Mammary epithelial cell (primary cell): ENCODE measurements at regions of chr22 and their contacts with region 1.

Region 1: GRCh38 chr22:44735540-44736488 is 16.6 kb upstream of the ARHGAP8 start:
- DNase-seq: no peak
- H3K4me3 ChIP-seq: no peak overlapping the region
- H3K27ac ChIP-seq: no peak overlapping the region
- H3K4me1 ChIP-seq: no peaks in the 10 kb centered on the region
- H3K27me3 ChIP-seq: no peaks in the 10 kb centered on the region
- CTCF ChIP-seq: peak; percentile 85 to 87

Region 2: GRCh38 chr22:44697423-44698141 is 38.2 kb before region 1 on chr22:
- CTCF ChIA-PET with region 1: no interaction called
- dilution Hi-C with region 1: loop called (anchors 5 kb)
- in situ Hi-C with region 1: loop called in 1 of 2 experiments (anchors 5 kb)
- intact Hi-C with region 1: loop called (anchors 1 kb)
- DNase-seq: peak; percentile 52
- H3K4me3 ChIP-seq: no peak overlapping the region
- H3K27ac ChIP-seq: no peak overlapping the region
- H3K4me1 ChIP-seq: peaks cover 9% of the 10 kb centered on the region
- H3K27me3 ChIP-seq: no peaks in the 10 kb centered on the region
- CTCF ChIP-seq: peak; percentile 93 to 95

Region 3: DNA sequence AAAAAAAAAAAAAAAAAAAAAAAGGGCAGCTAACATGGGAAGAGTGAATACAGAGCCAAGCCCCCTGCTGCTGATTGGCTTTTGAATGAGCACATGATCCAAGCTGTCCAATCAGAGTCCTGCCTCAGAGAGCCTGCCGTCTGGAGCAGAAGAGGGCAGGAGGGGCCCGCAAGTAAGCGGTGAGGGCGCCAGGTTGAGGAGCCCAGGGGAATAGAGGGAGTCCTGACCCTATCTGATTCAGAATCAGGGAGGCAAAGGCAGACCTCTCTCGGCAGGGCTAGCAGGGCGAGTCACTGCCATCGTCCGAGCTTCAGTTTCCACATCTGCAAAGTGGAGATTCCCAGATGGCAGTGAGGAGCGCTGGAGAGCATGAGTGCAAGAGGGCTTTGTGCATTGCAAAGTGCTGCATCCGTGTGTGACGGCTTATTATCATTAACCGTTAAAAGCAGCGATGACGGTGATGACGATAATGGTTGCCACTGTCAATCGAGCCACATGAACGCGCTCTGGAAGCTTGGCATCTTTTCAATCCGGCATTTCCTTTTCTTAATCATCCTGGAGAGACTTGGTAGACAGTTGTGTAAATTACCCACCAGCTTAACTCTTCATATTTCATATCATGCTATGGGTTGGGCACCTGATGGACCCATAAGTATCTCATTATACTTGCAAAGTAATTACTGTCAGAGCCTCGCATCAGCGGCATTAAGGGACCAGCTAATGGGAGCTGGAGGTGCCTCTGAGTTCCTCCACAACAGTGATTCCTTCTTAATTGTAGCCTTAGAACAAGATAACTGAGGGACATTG is 867.2 kb after region 1 on chr22:
- CTCF ChIA-PET with region 1: no interaction called
- dilution Hi-C with region 1: no loop called
- in situ Hi-C with region 1: no loop called
- intact Hi-C with region 1: no loop called
- DNase-seq: no peak
- H3K4me3 ChIP-seq: no peak overlapping the region
- H3K27ac ChIP-seq: peak overlapping the region; percentile 83
- H3K4me1 ChIP-seq: peaks cover 37% of the 10 kb centered on the region
- H3K27me3 ChIP-seq: no peaks in the 10 kb centered on the region
- CTCF ChIP-seq: no peak